ENCODE measurements at regions of chr15 and their contacts with region 1.

Region 1: GRCh38 chr15:78893538-78893937 is 20.8 kb downstream of the MORF4L1 start:
- DNase-seq: no peak
- ATAC-seq: peak; percentile 33
- H3K4me3 Mint-ChIP-seq: no peak overlapping the region
- H3K27ac Mint-ChIP-seq: no peak overlapping the region
- H3K4me1 Mint-ChIP-seq: peaks cover 25% of the 10 kb centered on the region
- H3K27me3 Mint-ChIP-seq: no peaks in the 10 kb centered on the region

Region 2: DNA sequence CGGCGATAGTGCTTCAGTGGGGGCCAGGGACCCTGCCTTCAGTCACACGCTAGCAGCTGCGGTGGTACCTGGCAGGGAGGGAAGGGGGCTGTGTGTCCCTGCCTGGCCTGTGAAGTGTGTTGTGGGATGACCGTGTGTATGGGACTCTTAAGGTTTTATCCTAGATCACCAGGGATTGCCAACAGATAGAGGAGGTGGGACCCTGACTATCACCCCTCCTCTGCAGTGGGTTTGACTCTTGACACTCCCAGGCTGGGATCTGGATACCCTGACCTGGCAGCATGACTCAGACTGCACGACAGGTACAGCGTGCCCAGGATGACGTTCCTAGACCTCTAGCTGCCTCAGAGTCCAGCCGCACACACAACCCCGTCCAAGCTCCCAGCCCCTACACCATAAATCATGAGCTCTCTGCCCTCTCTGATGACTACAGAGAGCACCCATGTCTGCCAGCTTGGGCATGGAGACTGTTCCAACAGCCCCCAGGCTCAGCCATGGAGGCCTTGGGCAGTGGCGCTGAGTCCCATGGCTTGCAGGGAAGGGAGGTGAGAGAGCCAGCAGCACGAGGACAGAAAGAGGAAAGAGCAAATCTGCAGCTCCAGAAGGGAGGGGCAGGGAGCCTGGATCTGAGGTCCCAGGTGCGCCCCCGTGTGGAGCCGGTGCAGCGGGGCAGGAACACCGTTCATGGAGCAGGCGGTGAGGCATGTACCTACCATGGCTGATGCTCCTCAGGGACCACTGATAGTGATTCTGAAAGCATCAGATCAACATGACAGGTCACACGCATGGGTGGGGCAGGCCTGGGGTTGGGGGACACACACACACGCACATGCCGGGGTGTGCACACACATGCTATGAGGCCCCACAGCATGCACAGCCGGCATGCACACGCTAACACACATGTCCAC is 153.3 kb before region 1 on chr15:
- CTCF ChIA-PET with region 1: no interaction called
- POLR2A ChIA-PET with region 1: no interaction called
- intact Hi-C with region 1: no loop called
- DNase-seq: peak; percentile 89
- ATAC-seq: peak; percentile 85
- H3K4me3 Mint-ChIP-seq: no peak overlapping the region
- H3K27ac Mint-ChIP-seq: no peak overlapping the region
- H3K4me1 Mint-ChIP-seq: peaks cover 2% of the 10 kb centered on the region
- H3K27me3 Mint-ChIP-seq: peaks cover 2% of the 10 kb centered on the region

Region 3: DNA sequence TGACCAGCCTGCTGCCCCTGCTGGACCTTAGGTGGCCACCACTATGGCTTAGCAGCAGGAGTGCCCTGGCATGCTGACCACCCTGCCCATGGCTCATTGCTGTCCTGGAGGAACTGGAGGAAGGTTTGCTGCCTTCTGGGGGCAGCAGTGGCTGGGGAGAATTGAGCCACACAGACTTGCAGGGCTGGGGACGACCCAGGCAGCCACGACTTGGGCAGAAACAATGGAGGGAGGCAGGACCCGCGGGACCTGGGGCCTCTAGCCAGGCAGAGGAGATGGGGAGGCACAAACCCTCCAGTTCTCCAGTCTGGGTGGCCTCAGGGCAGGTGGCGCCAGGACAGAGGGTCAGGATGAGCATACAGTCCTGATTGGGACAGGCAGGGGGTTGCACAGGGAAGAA is 115.1 kb before region 1 on chr15:
- CTCF ChIA-PET with region 1: no interaction called
- POLR2A ChIA-PET with region 1: no interaction called
- intact Hi-C with region 1: no loop called
- DNase-seq: no peak
- ATAC-seq: no peak
- H3K4me3 Mint-ChIP-seq: no peak overlapping the region
- H3K27ac Mint-ChIP-seq: no peak overlapping the region
- H3K4me1 Mint-ChIP-seq: no peaks in the 10 kb centered on the region
- H3K27me3 Mint-ChIP-seq: no peaks in the 10 kb centered on the region

Region 4: DNA sequence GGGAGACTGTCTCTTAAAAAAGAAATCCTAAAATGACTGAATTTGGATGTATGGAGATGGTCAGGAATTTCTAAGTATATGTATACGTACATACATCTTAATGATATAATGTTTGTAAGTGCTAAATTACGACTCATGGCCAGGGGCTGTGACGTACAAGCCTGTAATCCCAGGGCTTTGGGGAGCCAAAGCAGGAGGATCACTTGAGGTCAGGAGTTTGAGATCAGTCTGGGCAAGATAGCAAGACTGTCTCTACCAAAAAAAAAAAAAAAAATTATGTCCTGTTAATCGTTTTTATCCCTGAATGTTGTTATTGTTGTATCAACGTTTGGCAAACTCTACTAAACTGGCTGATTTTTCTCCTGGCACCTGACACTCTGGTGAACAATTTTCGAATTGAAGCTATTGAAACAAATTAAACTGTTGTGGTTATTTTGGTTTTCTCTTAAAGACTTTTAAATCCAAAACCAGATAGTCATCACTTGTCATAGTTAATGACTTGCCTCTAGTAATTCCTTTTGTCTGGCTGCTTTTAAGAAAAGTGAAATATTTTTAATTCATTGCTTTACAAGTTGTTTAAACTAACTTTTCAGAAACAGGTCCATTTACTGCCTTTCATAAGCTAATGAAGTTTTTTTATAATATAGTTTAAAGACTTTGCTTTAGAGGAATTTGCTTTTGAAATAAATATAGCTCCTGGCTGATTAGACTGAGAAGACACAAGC is 13.9 kb before region 1 on chr15:
- CTCF ChIA-PET with region 1: interaction called, 6 read pairs
- POLR2A ChIA-PET with region 1: interaction called, 11 read pairs
- intact Hi-C with region 1: loop called in 1 of 2 experiments (anchors 2 kb)
- DNase-seq: no peak
- ATAC-seq: peak; percentile 34
- H3K4me3 Mint-ChIP-seq: peak overlapping the region; percentile 12
- H3K27ac Mint-ChIP-seq: peak overlapping the region; percentile 80
- H3K4me1 Mint-ChIP-seq: peaks cover 76% of the 10 kb centered on the region
- H3K27me3 Mint-ChIP-seq: no peaks in the 10 kb centered on the region

Region 5: DNA sequence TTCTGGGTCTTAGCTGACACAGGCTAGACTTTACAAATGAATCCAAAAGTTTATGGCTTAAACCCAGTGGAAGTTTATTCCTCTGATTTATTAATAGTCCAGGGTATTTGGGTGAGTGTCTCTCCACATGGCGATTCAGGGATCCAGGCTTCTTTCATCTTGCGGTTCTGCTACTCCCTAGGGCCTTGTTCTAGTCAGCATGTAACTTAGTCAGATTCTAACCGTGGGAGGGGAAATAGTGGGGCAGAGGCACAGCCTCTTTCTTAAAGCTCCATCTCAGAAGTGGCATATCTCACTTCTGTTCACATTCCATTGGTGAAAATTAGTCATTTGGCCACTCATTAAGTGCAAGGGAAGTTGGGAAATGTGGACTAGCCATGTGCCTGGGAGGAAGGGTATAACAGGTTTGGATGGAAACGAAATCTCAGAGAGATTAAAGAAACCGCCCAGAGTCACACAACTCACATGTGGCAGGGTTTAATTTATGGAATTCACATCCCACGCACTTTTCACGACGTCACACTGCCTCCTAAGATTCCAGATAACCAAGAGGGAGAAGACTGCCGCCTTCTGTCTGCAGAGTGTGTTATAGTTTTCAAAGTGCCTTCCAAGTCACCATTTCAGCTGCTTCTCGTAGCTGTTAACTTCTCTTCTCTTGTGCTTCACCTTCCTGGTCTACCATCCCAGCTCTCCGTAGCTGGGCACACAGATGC is 208.5 kb after region 1 on chr15:
- CTCF ChIA-PET with region 1: no interaction called
- POLR2A ChIA-PET with region 1: no interaction called
- intact Hi-C with region 1: no loop called
- DNase-seq: no peak
- ATAC-seq: no peak
- H3K4me3 Mint-ChIP-seq: no peak overlapping the region
- H3K27ac Mint-ChIP-seq: no peak overlapping the region
- H3K4me1 Mint-ChIP-seq: peaks cover 12% of the 10 kb centered on the region
- H3K27me3 Mint-ChIP-seq: peaks cover 46% of the 10 kb centered on the region